ENCODE measurements at regions of chr10 and their contacts with region 1.

Region 1: DNA sequence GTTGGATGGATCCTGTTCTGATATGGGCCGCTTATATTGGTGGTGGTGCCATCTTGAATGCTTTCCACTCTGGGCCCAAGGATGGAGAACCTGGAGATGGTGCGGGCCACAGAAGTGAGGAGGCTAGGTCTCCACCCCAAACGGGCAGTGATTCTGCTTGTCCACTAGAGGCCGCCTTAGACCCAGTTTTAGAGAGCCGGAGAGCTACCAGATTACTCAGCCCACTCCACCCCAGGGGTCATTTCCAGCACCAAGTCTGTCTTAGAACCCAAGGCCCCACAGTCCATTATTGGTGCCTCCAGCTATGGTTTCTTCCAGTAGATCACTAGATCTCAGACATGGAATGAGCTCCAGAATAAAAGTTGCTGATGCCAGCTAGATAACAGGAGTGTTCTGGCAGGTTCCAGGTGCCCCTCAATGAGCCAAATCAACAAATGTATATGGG is 11.8 kb upstream of the CAMK2G start:
- DNase-seq: peak; percentile 83
- H3K4me3 ChIP-seq: peak overlapping the region in 1 of 2 experiments; percentile 27; a peak in 1 of 4 replicates
- H3K27ac ChIP-seq: peak overlapping the region; percentile 84 to 98; a peak in 3 of 4 replicates
- H3K4me1 ChIP-seq: peaks cover 22 to 31% of the 10 kb centered on the region in 2 experiments; a peak in 3 of 4 replicates
- H3K27me3 ChIP-seq: no peaks in the 10 kb centered on the region
- CTCF ChIP-seq: peak; percentile 90
- EP300 ChIP-seq: no peak
- RAD21 ChIP-seq: peak; percentile 95

Region 2: GRCh38 chr10:73899423-73899822 is 13.3 kb after region 1 on chr10:
- CTCF ChIA-PET with region 1: interaction called, 26 read pairs
- POLR2A ChIA-PET with region 1: no interaction called
- DNase-seq: no peak
- H3K4me3 ChIP-seq: no peak overlapping the region
- H3K27ac ChIP-seq: peak overlapping the region in 1 of 2 experiments; percentile 41; a peak in 2 of 4 replicates
- H3K4me1 ChIP-seq: peaks cover 0 to 8% of the 10 kb centered on the region in 2 experiments; a peak in 1 of 4 replicates
- H3K27me3 ChIP-seq: no peaks in the 10 kb centered on the region
- CTCF ChIP-seq: no peak
- EP300 ChIP-seq: peak in 1 of 2 experiments; percentile 92; a peak in 2 of 4 replicates
- RAD21 ChIP-seq: no peak

Region 3: GRCh38 chr10:73908853-73909538 is 22.9 kb after region 1 on chr10:
- CTCF ChIA-PET with region 1: interaction called, 10 read pairs
- POLR2A ChIA-PET with region 1: no interaction called
- DNase-seq: no peak
- H3K4me3 ChIP-seq: 0 out of 4 replicates have a peak overlapping the region, but pooled peaks of 1 of the 2 experiments have one; percentile 9
- H3K27ac ChIP-seq: peak overlapping the region in 1 of 2 experiments; percentile 92; a peak in 3 of 4 replicates
- H3K4me1 ChIP-seq: peaks cover 15 to 20% of the 10 kb centered on the region in 2 experiments; a peak in 2 of 4 replicates
- H3K27me3 ChIP-seq: no peaks in the 10 kb centered on the region
- CTCF ChIP-seq: no peak
- EP300 ChIP-seq: peak in 1 of 2 experiments; percentile 82; a peak in 1 of 4 replicates
- RAD21 ChIP-seq: no peak

Region 4: GRCh38 chr10:73998929-73999691 is 113.0 kb after region 1 on chr10:
- CTCF ChIA-PET with region 1: interaction called, 10 read pairs
- POLR2A ChIA-PET with region 1: no interaction called
- DNase-seq: peak; percentile 70
- H3K4me3 ChIP-seq: peak overlapping the region; percentile 84 to 90
- H3K27ac ChIP-seq: peak overlapping the region; percentile 80 to 94
- H3K4me1 ChIP-seq: peaks cover 7 to 28% of the 10 kb centered on the region in 2 experiments; a peak in 2 of 4 replicates
- H3K27me3 ChIP-seq: no peaks in the 10 kb centered on the region
- CTCF ChIP-seq: peak; percentile 63
- EP300 ChIP-seq: 0 out of 4 replicates have a peak, but pooled peaks of 1 of the 2 experiments have one; percentile 45
- RAD21 ChIP-seq: peak; percentile 12; the same call in 1 of the 2 replicates

Region 5: DNA sequence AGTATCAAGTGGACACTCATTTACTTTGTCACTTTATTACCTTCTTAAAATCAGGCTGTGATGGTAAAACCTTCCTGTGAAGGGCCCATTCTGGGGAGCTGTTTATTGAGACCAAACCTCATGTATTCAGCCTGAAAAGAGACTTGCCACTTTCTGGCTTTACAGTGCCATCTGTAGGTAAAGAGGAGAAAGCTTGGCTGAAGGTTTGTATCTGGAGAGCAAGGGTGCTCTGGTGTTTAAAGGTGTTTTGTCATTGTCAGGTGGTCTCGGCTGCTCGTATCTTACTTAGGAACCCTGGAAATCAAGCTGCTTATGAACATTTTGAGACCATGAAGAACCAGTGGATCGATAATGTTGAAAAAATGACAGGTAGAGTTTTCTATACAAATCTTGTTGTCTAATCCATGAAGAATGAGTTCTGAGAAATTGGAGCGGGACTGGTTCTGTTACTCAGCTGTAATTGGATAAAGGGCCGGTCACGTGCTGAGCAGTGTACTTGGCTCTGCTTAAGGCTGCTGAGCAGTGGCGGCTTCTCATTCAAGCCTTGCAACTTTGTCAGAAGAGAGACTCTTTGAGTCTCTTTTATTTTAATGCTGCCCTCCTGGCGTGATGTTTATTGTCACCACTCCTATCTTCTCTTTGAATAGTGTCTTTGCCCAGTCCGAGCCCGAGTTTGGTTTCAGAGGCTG is 217.6 kb after region 1 on chr10:
- CTCF ChIA-PET with region 1: interaction called, 10 read pairs
- POLR2A ChIA-PET with region 1: no interaction called
- DNase-seq: peak; percentile 36
- H3K4me3 ChIP-seq: no peak overlapping the region
- H3K27ac ChIP-seq: no peak overlapping the region; a peak in 1 of 4 replicates
- H3K4me1 ChIP-seq: peaks cover 0 to 5% of the 10 kb centered on the region in 2 experiments; a peak in 1 of 4 replicates
- H3K27me3 ChIP-seq: no peaks in the 10 kb centered on the region
- CTCF ChIP-seq: peak; percentile 56
- EP300 ChIP-seq: no peak
- RAD21 ChIP-seq: peak; percentile 60

Region 6: GRCh38 chr10:74234569-74234968 is 348.5 kb after region 1 on chr10:
- CTCF ChIA-PET with region 1: interaction called, 14 read pairs
- POLR2A ChIA-PET with region 1: no interaction called
- DNase-seq: no peak
- H3K4me3 ChIP-seq: no peak overlapping the region
- H3K27ac ChIP-seq: peak overlapping the region in 1 of 2 experiments; percentile 50; a peak in 1 of 4 replicates
- H3K4me1 ChIP-seq: peaks cover 7 to 29% of the 10 kb centered on the region in 2 experiments; a peak in 3 of 4 replicates
- H3K27me3 ChIP-seq: no peaks in the 10 kb centered on the region
- CTCF ChIP-seq: peak; percentile 72
- EP300 ChIP-seq: no peak
- RAD21 ChIP-seq: peak; percentile 52

Measured in SK-N-SH (cell line).